Activated T-helper 1 cell treated with anti-CD3 and anti-CD28 coated beads, Interleukin-12 subunit alpha, Interleukin-12 subunit beta, Interleukin-2, Interleukin-4 antibody, amounts not matched to agents 30 ng/mL and 10 ng/mL and 1 ng/mL, durations not matched to agents 14 hours and 24 hours and 36 hours (primary cell): ENCODE measurements at regions of chr7 and their contacts with region 1.

Region 1: DNA sequence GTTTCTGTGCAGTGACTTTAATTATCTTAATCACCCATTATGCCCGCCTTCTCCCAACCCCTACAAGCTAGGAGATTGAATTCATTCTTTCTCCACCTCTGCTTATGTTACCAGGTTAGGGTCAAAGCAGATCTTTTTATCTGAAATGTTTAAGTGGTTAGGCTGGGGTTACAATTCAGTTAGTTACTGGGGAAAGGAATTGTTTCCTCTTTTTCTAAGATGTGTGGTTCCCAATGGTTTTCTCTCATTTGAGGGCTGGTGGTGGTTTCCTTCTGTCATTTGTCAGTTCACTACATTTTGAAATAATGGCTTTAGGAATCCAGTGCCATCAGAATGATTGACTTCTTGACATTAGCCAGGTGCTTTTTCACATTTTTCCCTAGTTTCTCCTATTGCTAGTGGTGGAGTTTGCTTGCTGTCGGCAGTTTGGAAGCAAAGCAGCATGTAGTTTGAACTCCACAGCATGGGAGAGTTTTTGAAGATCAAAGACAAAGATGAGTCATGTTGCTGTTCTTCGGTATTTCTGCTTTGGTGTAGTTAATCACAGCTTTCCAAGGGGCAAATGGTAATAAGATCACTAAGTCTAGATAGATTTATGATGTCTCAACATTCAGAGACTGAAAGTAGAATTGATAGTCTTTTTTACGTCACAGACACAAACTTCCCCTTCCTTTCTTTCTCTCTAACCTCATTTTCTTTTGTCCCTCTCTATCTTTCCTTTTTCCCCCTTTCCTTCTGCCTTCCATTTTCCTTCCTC is 168.2 kb downstream of the SND1 start:
- DNase-seq: no peak
- H3K4me3 Mint-ChIP-seq: peak overlapping the region; percentile 3
- H3K27ac Mint-ChIP-seq: peak overlapping the region; percentile 37
- H3K4me1 Mint-ChIP-seq: peaks cover 46% of the 10 kb centered on the region
- H3K27me3 Mint-ChIP-seq: no peaks in the 10 kb centered on the region

Region 2: GRCh38 chr7:127807340-127807739 is 12.8 kb before region 1 on chr7:
- intact Hi-C with region 1: loop called (anchors 2 kb)
- DNase-seq: no peak
- H3K4me3 Mint-ChIP-seq: no peak overlapping the region
- H3K27ac Mint-ChIP-seq: no peak overlapping the region
- H3K4me1 Mint-ChIP-seq: peaks cover 37% of the 10 kb centered on the region
- H3K27me3 Mint-ChIP-seq: no peaks in the 10 kb centered on the region

Region 3: GRCh38 chr7:128135515-128136214 is 315.5 kb after region 1 on chr7:
- intact Hi-C with region 1: no loop called
- DNase-seq: peak; percentile 53
- H3K4me3 Mint-ChIP-seq: peak overlapping the region; percentile 77
- H3K27ac Mint-ChIP-seq: no peak overlapping the region
- H3K4me1 Mint-ChIP-seq: peaks cover 14% of the 10 kb centered on the region
- H3K27me3 Mint-ChIP-seq: peaks cover 60% of the 10 kb centered on the region